BJ (cell line): ENCODE measurements at regions of chr5 and their contacts with region 1.

Region 1: DNA sequence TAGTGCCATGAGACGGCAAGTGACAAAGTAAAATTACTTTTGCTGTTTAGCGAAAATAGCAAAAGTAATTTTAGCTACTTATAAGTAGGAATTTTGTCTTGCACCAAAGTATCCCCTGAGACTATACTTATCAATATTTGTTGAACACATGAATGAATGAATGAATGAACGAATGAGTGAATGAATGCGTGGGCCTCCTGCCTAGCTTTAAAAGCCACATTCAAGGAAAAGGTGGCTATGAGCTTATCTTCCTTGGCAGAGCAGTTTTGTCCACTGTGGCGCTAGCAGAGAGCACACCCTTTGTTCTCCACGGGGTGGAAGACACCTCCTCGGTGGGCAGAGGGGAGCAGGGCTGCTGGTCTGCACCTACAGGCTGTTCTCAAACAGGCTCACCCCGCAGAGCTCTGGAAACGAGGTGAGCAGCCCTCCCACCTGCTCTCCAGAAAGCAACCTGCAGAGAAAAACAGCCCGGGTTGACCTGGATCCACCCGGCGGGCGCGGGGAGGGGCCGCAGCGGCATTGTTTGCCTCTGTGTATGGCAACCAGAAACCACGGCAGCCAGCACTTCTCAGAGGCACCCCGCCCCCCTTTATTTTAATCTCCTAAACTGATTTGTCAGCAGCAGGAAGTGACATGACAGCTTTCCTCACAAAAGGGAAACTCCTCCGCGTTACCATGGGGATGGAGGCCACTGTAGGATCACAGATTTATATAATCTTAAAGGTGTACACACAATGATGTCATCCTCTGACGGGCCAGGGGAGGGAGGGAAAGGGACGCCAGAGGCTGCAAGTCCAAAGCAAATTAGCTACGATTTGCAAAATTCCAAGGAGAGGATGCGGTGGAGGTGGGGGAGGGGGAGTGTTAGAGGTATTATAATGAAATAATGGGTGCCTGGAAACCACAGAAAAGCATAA is 5.9 kb downstream of the DUSP1 start:
- DNase-seq: peak; percentile 99
- H3K4me3 ChIP-seq: peak overlapping the region; percentile 35
- H3K27me3 ChIP-seq: no peaks in the 10 kb centered on the region
- CTCF ChIP-seq: no peak

Region 2: GRCh38 chr5:172733131-172733973 is 31.8 kb before region 1 on chr5:
- CTCF ChIA-PET with region 1: interaction called, 3 read pairs
- POLR2A ChIA-PET with region 1: interaction called, 10 read pairs
- DNase-seq: peak; percentile 99
- H3K4me3 ChIP-seq: no peak overlapping the region
- H3K27me3 ChIP-seq: no peaks in the 10 kb centered on the region
- CTCF ChIP-seq: no peak

Region 3: DNA sequence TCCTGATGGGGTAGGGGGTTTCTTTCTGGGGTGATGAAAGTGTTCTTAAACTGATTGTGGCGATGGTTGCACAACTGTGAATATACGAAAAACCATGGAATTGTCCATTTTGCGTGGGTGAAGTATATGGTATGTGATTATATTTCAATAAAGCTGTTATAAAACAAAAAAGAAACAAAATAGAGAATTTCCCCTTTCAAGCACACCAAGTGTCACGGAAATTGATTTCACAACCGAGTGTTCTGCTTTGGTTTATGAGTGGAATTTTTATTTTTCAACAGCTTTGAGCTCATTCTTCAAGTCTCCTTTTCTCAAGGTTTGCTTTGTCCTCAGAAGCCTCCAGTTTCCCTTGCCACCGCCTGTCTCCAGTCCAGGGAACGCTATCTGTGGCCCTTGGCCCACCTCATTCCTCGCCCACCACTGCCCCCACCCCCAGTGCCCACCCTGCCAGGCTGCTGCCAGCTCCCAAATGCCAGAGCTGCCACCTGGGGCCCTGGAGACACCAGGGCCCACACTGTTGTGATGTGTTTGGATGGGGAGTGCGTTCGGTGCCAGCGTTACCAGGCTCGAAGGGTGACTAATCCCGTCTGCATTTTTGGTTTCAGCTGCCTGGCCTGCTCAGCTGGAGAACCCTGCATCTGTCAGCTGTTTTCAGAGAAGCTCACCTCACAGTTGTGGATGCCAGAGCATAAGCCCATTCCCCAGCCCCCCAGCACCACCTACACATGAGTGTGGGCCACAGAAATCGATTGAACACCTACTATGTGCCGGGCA is 24.5 kb before region 1 on chr5:
- CTCF ChIA-PET with region 1: no interaction called
- POLR2A ChIA-PET with region 1: interaction called, 18 read pairs
- DNase-seq: peak; percentile 75
- H3K4me3 ChIP-seq: no peak overlapping the region
- H3K27me3 ChIP-seq: no peaks in the 10 kb centered on the region
- CTCF ChIP-seq: no peak